ENCODE measurements at regions of chr2 and their contacts with region 1.

Region 1: GRCh38 chr2:79219383-79219988 is 59.9 kb upstream of the REG3A start:
- DNase-seq: peak; percentile 41 to 65 (median 58)
- ATAC-seq: peak; percentile 71
- H3K4me3 ChIP-seq: no peak overlapping the region
- H3K27ac ChIP-seq: no peak overlapping the region
- H3K4me1 ChIP-seq: no peaks in the 10 kb centered on the region
- H3K27me3 ChIP-seq: no peaks in the 10 kb centered on the region
- CTCF ChIP-seq: peak; percentile 44 to 78 (median 65); a peak in 5 of 6 replicates
- EP300 ChIP-seq: no peak
- POLR2A ChIP-seq: no peak
- RAD21 ChIP-seq: peak; percentile 67 to 68

Region 2: DNA sequence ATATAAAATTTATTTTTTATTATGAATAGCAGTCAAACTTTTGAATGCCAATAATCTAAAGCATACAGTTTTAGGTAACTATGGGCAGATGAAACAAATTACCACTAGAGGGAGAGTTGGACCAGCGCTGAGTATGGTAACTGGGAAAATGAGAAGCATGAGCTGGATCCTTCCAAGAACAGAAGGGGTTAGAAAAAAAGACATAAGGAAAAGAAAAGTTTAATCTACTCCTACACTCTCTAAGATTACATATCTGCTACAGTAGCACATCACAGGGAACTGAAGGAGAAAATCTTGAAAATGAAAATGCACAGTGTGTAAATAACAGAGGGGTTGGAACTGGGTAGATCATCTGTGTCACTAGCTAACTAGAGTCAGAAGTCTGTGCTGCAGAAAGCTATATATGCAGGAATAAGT is 178.4 kb before region 1 on chr2:
- CTCF ChIA-PET with region 1: no interaction called
- POLR2A ChIA-PET with region 1: no interaction called
- in situ Hi-C with region 1: no loop called
- intact Hi-C with region 1: loop called (anchors 1 kb)
- DNase-seq: peak in 3 of 4 experiments; percentile 7 to 12 (median 10)
- ATAC-seq: peak; percentile 61; the same call in 1 of the 3 replicates
- H3K4me3 ChIP-seq: no peak overlapping the region
- H3K27ac ChIP-seq: no peak overlapping the region
- H3K4me1 ChIP-seq: no peaks in the 10 kb centered on the region
- H3K27me3 ChIP-seq: no peaks in the 10 kb centered on the region
- CTCF ChIP-seq: peak in 2 of 3 experiments; percentile 22 to 57; a peak in 3 of 6 replicates
- EP300 ChIP-seq: no peak
- POLR2A ChIP-seq: no peak
- RAD21 ChIP-seq: peak; percentile 36

Region 3: GRCh38 chr2:79860228-79861058 is 641.0 kb after region 1 on chr2:
- CTCF ChIA-PET with region 1: no interaction called
- POLR2A ChIA-PET with region 1: no interaction called
- in situ Hi-C with region 1: no loop called
- intact Hi-C with region 1: loop called (anchors 10 kb)
- DNase-seq: peak; percentile 10 to 13 (median 12)
- ATAC-seq: peak; percentile 64; the same call in 1 of the 3 replicates
- H3K4me3 ChIP-seq: no peak overlapping the region
- H3K27ac ChIP-seq: no peak overlapping the region
- H3K4me1 ChIP-seq: no peaks in the 10 kb centered on the region
- H3K27me3 ChIP-seq: no peaks in the 10 kb centered on the region
- CTCF ChIP-seq: peak; percentile 29 to 67 (median 51); a peak in 4 of 6 replicates
- EP300 ChIP-seq: no peak
- POLR2A ChIP-seq: no peak
- RAD21 ChIP-seq: peak in 1 of 2 experiments; percentile 57; a peak in 2 of 4 replicates

Measured in K562 (cell line).